HEK293 (cell line): ENCODE measurements at regions of chr7 and their contacts with region 1.

Region 1: GRCh38 chr7:108452722-108453121 is 3.5 kb downstream of the NRCAM start:
- H3K4me3 ChIP-seq: no peak overlapping the region
- H3K27ac ChIP-seq: no peak overlapping the region
- H3K4me1 ChIP-seq: peaks cover 24% of the 10 kb centered on the region
- CTCF ChIP-seq: peak; percentile 22; the same call in 1 of the 2 replicates

Region 2: GRCh38 chr7:108442039-108442568 is 10.6 kb before region 1 on chr7:
- CTCF ChIA-PET with region 1: interaction called, 15 read pairs
- POLR2A ChIA-PET with region 1: interaction called, 8 read pairs
- H3K4me3 ChIP-seq: no peak overlapping the region
- H3K27ac ChIP-seq: no peak overlapping the region
- H3K4me1 ChIP-seq: peaks cover 4% of the 10 kb centered on the region
- CTCF ChIP-seq: no peak